Left ventricle myocardium superior (tissue), 1 donor: ENCODE measurements at regions of chr16 and their contacts with region 1.

Region 1: DNA sequence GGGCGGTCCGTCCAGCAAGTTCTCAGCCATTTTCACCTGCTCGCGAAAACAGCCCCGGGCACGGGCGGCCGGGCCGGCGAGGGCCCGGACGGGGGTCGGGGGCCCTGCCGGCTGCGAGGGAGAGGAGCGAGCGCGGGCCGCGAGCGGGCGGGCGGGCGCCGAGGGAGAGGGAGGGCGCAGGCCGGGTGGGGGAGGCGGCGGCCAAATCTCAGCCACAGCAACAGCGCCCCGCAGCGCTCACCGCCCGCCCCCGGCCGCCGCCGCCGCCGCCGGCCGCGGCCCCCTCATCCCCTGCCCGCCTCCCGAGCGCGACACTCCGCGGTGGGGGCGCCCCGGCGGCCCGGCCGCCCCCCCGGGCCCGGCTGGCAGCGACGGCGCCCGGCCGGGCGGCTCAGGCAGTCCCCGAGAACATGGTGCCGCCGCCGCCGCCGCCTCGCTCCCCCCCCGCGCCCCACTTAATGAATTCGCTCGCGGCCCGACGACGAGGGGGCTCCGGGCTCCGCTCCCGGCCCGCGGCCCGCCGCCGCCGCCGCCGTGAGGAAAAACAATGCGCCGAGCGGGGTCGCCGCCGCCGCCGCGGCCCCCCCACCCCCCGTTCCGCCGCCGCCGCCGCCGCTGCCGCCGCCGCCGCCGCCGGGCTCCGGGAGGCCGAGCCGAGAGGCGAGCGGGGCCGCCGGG is 487 bp downstream of the CREBBP start:
- DNase-seq: peak; percentile 90
- ATAC-seq: peak; percentile 79

Region 2: DNA sequence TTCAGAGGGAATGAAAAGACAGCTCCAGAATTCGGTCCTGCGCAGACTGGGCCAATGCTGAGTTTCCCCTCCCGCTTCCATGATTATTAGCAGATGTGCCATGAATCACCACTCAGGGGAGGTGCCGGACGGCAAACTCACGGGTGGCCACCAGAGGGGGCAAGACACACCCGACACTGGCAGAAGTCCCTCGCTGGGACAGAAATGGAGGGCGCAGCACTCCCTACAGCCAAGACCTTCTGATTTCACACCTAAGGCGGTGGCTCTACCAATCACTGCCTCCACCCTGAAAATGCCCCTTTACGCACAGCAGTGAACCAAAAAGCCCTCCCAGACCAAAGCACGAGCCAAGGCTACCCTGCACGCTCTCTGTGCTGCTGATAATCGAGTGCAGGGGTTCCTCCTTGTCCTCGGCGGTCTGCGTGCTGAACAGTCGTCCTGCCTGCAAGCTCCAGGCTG is 189.5 kb before region 1 on chr16:
- intact Hi-C with region 1: loop called (anchors 10 kb)
- DNase-seq: peak; percentile 94
- ATAC-seq: peak; percentile 95

Region 3: DNA sequence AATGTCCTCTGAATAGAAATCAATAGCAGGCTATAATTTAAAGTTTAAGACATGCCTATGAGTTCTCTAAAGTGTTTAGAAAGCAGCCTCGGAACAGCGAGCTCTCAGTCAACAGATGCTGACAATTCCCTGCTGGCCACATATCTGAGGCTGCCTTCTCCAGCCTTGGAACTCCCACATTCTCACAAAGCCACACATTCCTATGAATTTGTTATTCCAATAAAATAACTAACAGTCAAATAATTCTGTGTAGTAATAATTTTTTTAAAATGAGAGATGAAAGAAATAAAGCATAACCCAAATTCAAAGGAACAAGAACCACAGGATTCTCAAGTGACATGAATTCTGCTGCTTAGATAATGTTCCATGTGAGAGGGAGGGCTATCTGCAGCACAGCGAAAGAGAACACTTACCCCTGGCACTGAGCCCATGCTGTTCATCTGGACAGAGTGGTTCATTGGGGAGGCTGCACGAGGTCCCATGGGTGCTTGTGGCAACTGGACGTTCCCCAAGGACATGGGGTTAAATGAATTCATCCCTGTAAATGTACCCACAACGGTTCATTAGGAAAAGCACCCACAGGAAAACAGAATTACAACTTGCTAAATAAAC is 105.8 kb before region 1 on chr16:
- intact Hi-C with region 1: loop called (anchors 10 kb)
- DNase-seq: peak; percentile 77
- ATAC-seq: peak; percentile 92